SK-N-SH (cell line): ENCODE measurements at regions of chr6 and their contacts with region 1.

Region 1: GRCh38 chr6:114304304-114304887 is 38.4 kb downstream of the HS3ST5 start:
- DNase-seq: no peak
- H3K4me3 ChIP-seq: no peak overlapping the region
- H3K27ac ChIP-seq: no peak overlapping the region
- H3K4me1 ChIP-seq: no peaks in the 10 kb centered on the region
- H3K27me3 ChIP-seq: no peaks in the 10 kb centered on the region
- CTCF ChIP-seq: peak; percentile 76
- EP300 ChIP-seq: no peak
- RAD21 ChIP-seq: peak; percentile 62

Region 2: GRCh38 chr6:113980937-113981554 is 323.4 kb before region 1 on chr6:
- CTCF ChIA-PET with region 1: interaction called, 12 read pairs
- POLR2A ChIA-PET with region 1: no interaction called
- DNase-seq: peak; percentile 67
- H3K4me3 ChIP-seq: no peak overlapping the region
- H3K27ac ChIP-seq: no peak overlapping the region
- H3K4me1 ChIP-seq: no peaks in the 10 kb centered on the region
- H3K27me3 ChIP-seq: no peaks in the 10 kb centered on the region
- CTCF ChIP-seq: peak; percentile 62
- EP300 ChIP-seq: no peak
- RAD21 ChIP-seq: peak; percentile 72

Region 3: GRCh38 chr6:114096561-114097172 is 207.7 kb before region 1 on chr6:
- CTCF ChIA-PET with region 1: interaction called, 10 read pairs
- POLR2A ChIA-PET with region 1: no interaction called
- DNase-seq: peak; percentile 56
- H3K4me3 ChIP-seq: no peak overlapping the region
- H3K27ac ChIP-seq: no peak overlapping the region
- H3K4me1 ChIP-seq: no peaks in the 10 kb centered on the region
- H3K27me3 ChIP-seq: no peaks in the 10 kb centered on the region
- CTCF ChIP-seq: peak; percentile 93
- EP300 ChIP-seq: no peak
- RAD21 ChIP-seq: peak; percentile 83

Region 4: GRCh38 chr6:114108119-114109002 is 196.0 kb before region 1 on chr6:
- CTCF ChIA-PET with region 1: interaction called, 16 read pairs
- POLR2A ChIA-PET with region 1: no interaction called
- DNase-seq: peak; percentile 23
- H3K4me3 ChIP-seq: no peak overlapping the region
- H3K27ac ChIP-seq: no peak overlapping the region
- H3K4me1 ChIP-seq: no peaks in the 10 kb centered on the region; a peak in 2 of 4 replicates
- H3K27me3 ChIP-seq: no peaks in the 10 kb centered on the region; the same call in none of the 2 replicates
- CTCF ChIP-seq: peak; percentile 79
- EP300 ChIP-seq: no peak
- RAD21 ChIP-seq: peak; percentile 63

Region 5: DNA sequence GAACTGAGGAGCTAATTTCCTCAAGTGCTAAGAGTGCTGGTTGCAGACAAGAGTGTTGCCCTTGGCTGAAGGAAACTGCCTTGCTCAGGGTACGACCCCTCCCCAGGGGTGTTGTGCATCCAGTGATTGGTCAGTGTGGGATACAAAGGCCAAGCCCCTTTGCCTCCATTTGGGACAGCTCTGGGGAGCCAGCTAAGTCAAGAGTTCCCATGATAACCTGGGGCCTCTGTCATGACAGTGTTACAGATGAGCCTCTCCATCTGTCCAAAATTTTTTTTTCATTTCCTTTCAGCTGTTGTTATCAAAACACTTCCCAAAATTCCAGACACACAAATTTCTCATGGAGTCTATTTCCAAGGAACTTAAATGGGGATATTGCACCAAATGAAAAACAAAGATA is 54.9 kb before region 1 on chr6:
- CTCF ChIA-PET with region 1: no interaction called
- POLR2A ChIA-PET with region 1: no interaction called
- DNase-seq: no peak
- H3K4me3 ChIP-seq: no peak overlapping the region
- H3K27ac ChIP-seq: no peak overlapping the region
- H3K4me1 ChIP-seq: no peaks in the 10 kb centered on the region
- H3K27me3 ChIP-seq: no peaks in the 10 kb centered on the region
- CTCF ChIP-seq: no peak
- EP300 ChIP-seq: no peak
- RAD21 ChIP-seq: no peak

Region 6: DNA sequence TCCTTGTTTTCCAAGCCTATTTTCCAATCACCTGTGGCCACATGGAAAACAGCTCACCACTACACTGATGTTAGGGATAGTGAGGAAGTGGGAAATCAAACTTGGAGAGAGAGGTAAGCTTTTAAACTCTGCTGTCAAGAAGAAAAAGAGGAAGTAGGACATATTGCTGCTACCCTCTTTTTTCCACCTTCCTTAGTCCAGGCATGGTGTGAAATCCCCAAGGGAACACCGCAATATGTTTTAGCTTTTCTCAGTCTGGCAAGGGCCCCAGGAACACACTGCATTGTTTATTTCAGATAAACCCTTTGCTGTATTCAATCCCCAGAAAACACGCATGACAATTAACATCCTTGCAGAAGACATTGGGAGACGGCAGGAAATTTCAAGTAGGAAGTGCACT is 22.9 kb before region 1 on chr6:
- CTCF ChIA-PET with region 1: interaction called, 11 read pairs
- POLR2A ChIA-PET with region 1: no interaction called
- DNase-seq: no peak
- H3K4me3 ChIP-seq: no peak overlapping the region
- H3K27ac ChIP-seq: no peak overlapping the region
- H3K4me1 ChIP-seq: no peaks in the 10 kb centered on the region; a peak in 1 of 4 replicates
- H3K27me3 ChIP-seq: no peaks in the 10 kb centered on the region
- CTCF ChIP-seq: no peak
- EP300 ChIP-seq: no peak
- RAD21 ChIP-seq: no peak

Region 7: GRCh38 chr6:114290864-114291263 is 13.5 kb before region 1 on chr6:
- CTCF ChIA-PET with region 1: interaction called, 17 read pairs
- POLR2A ChIA-PET with region 1: no interaction called
- DNase-seq: no peak
- H3K4me3 ChIP-seq: no peak overlapping the region
- H3K27ac ChIP-seq: no peak overlapping the region
- H3K4me1 ChIP-seq: no peaks in the 10 kb centered on the region
- H3K27me3 ChIP-seq: no peaks in the 10 kb centered on the region
- CTCF ChIP-seq: no peak
- EP300 ChIP-seq: no peak
- RAD21 ChIP-seq: no peak

Region 8: GRCh38 chr6:114445846-114446245 is 141.4 kb after region 1 on chr6:
- CTCF ChIA-PET with region 1: no interaction called
- POLR2A ChIA-PET with region 1: no interaction called
- DNase-seq: no peak
- H3K4me3 ChIP-seq: no peak overlapping the region
- H3K27ac ChIP-seq: no peak overlapping the region
- H3K4me1 ChIP-seq: no peaks in the 10 kb centered on the region
- H3K27me3 ChIP-seq: no peaks in the 10 kb centered on the region
- CTCF ChIP-seq: no peak
- EP300 ChIP-seq: no peak
- RAD21 ChIP-seq: no peak